ENCODE measurements at regions of chr18 and their contacts with region 1.

Region 1: GRCh38 chr18:24271381-24272331 is 126.0 kb downstream of the OSBPL1A start:
- DNase-seq: peak; percentile 83
- H3K4me3 ChIP-seq: peak overlapping the region; percentile 58 to 91 (median 74)
- H3K27ac ChIP-seq: peak overlapping the region; percentile 67
- H3K4me1 ChIP-seq: peaks cover 17% of the 10 kb centered on the region
- H3K27me3 ChIP-seq: no peaks in the 10 kb centered on the region
- CTCF ChIP-seq: peak in 1 of 2 donors; percentile 39

Region 2: DNA sequence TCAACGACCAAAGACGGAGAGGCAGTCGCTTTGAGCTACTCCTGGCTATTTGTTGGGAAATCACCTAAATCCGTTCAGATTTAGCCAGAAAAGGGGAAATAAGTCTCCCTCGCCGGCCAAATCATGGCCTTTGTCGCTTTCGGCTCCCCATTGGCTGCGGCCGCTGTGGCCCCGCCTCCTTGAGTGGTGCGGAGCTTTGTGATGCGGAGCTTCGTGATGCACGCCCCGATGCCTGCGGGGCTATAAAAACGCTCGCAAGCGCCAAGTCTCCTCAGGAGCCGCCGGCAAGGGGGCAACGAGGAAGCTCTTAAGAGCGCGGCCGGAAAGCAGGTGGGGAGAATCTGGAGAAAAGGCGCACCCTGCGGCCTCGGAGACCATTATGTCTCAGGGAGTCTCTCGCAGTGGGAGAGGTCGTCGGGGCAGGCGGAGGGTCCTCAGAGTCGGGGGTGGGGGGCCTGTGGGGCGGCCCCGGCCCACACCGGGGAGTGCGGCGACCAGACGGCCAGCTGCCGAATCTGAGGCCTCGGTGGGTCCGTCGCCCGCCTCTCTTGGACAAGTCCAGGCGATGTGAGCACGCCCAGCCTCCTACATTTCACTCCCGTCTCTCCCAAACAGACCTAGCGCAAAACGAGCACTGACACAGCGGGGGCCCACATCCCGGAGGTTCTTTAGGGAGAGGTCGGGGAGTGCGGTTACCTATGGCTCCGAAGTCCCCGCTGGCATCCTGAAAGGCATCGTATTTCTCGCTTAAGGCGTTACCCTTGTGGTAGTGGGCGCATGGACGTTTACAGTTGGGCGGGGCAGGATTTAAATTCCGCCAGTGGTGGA is 132.7 kb before region 1 on chr18 and contains the start of gene CABYR:
- CTCF ChIA-PET with region 1: no interaction called
- dilution Hi-C with region 1: no loop called
- in situ Hi-C with region 1: no loop called
- intact Hi-C with region 1: loop called (anchors 5 kb)
- DNase-seq: peak; percentile 86
- H3K4me3 ChIP-seq: peak within 1 kb of the TSS; percentile 71 to 73 (median 73)
- H3K27ac ChIP-seq: peak within 1 kb of the TSS; percentile 58
- H3K4me1 ChIP-seq: no peaks in the 10 kb centered on the region
- H3K27me3 ChIP-seq: no peaks in the 10 kb centered on the region
- CTCF ChIP-seq: no peak
- total RNA-seq, gene CABYR: 9.0 to 10.9 TPM

Region 3: DNA sequence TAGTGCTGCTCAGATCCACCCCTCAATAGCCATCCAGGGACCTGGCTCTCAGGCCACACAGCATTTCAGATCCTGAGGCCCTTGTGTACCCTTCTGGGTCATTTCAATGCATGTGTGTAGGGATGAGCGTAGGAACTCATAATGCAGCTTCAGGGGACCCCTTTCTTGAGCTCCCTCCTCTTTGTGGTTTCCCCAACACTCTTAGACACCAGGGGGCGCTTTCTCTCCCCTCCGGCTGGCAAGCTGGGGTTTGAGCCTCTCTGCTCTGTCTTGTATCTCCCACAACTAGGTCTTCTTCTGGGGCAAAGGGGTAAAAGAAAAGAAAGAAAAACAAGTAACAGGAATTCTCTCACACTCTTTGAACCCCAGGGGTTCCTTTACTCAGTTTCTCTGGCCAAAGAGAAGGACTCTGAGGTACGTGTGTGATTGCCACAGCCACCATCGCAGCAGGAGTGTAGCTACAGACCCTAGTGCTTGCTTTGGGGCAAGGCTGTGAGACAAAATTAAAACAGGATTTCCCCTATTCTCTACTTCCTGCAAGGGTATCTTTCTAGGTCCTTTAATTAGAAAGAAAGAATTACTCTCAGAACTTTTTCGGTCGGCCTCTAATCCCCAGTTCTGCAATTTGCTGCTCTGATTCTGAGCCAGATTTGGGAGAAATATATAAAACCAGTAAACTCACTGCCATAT is 94.8 kb before region 1 on chr18:
- CTCF ChIA-PET with region 1: interaction called, 3 read pairs
- dilution Hi-C with region 1: no loop called
- in situ Hi-C with region 1: no loop called
- intact Hi-C with region 1: loop called (anchors 1 kb)
- DNase-seq: peak; percentile 27
- H3K4me3 ChIP-seq: no peak overlapping the region
- H3K27ac ChIP-seq: no peak overlapping the region
- H3K4me1 ChIP-seq: peaks cover 9% of the 10 kb centered on the region
- H3K27me3 ChIP-seq: no peaks in the 10 kb centered on the region
- CTCF ChIP-seq: peak; percentile 62 to 91

Region 4: GRCh38 chr18:24212939-24213338 is 58.7 kb before region 1 on chr18:
- CTCF ChIA-PET with region 1: no interaction called
- dilution Hi-C with region 1: no loop called
- in situ Hi-C with region 1: no loop called
- intact Hi-C with region 1: loop called (anchors 1 kb)
- DNase-seq: peak; percentile 99
- H3K4me3 ChIP-seq: no peak overlapping the region
- H3K27ac ChIP-seq: peak overlapping the region; percentile 84
- H3K4me1 ChIP-seq: peaks cover 53% of the 10 kb centered on the region
- H3K27me3 ChIP-seq: no peaks in the 10 kb centered on the region
- CTCF ChIP-seq: no peak

Measured in mammary epithelial cell (primary cell).